ENCODE measurements at regions of chr2 and their contacts with region 1.

Region 1: DNA sequence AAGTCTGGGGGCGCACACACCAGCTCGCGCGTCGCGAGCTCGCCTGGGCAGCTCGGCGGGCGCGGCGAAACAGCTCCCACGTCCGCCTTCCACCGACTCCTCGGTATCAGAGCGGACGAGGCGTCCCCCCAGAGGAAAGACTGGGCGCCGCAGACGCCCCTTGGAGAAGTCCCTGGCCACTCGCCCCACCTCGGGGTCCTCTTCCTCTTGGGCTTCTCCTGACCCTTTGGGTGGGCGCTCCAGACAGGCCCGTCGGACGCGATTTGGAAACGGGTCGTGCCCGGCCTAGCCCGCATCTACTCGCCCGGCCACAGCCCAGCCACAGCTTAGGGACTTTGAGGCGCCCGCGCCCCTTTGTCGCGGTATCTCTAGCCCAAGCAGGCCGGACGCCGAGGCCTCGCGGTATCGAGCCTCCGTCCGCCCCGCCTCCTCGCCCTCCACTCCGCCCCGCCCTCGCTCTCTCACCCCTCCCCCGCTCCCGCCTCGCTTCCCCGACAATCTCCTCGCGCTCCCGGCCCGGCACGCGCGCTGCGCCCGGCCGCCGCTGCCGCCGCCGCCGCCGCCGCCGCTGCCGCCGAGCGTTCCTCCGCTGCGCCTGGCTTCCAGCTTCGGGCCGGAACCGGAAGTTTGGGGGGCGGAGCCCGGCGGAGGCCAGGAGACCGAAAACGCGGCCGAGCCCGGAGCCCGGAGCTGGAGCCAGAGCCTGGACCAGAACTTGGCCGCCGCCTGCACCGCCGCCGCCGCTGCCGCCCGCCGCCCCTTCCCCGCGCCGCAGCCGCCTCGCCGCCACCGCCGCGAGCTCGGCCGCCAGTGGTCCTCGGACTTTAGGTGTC is 749 bp upstream of the ACVR2A start:
- DNase-seq: peak; percentile 46 to 92
- H3K4me3 ChIP-seq: peak overlapping the region; percentile 71 to 89 (median 84)
- H3K27ac ChIP-seq: peak overlapping the region; percentile 94
- H3K4me1 ChIP-seq: peaks cover 2 to 10% (median 3%) of the 10 kb centered on the region in 4 experiments; a peak in 4 of 7 replicates
- H3K27me3 ChIP-seq: no peaks in the 10 kb centered on the region
- CTCF ChIP-seq: peak in 1 of 3 experiments; percentile 18; a peak in 1 of 4 replicates
- EP300 ChIP-seq: no peak
- POLR2A ChIP-seq: peak; percentile 89 to 93
- RAD21 ChIP-seq: peak; percentile 25 to 27; a peak in 2 of 4 replicates

Region 2: DNA sequence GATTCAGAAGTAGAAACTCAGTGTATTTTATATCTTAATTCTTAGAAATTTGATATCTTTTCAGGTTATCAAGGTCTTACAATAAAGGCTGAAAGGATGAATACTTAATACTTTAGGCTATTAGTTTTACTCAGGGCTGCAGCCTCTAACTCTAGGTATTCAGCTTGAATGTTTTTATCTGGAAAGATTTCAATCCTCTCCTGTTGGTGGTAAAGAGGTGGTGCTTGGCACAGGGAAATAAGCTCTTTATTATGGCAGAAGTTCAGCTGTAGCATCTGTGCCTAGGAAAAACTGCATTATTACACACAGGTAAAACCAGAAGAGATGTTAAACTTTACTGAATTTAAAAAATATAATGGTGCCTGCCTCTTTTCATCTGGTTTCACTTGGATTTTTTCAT is 11.9 kb after region 1 on chr2:
- CTCF ChIA-PET with region 1: interaction called, 3 read pairs
- POLR2A ChIA-PET with region 1: interaction called, 13 read pairs
- DNase-seq: no peak
- H3K4me3 ChIP-seq: no peak overlapping the region
- H3K27ac ChIP-seq: no peak overlapping the region
- H3K4me1 ChIP-seq: peaks cover 0 to 8% (median 6%) of the 10 kb centered on the region in 4 experiments; a peak in 4 of 7 replicates
- H3K27me3 ChIP-seq: no peaks in the 10 kb centered on the region
- CTCF ChIP-seq: no peak
- EP300 ChIP-seq: no peak
- POLR2A ChIP-seq: no peak
- RAD21 ChIP-seq: no peak